SK-N-SH (cell line): ENCODE measurements at regions of chr9 and their contacts with region 1.

Region 1: GRCh38 chr9:130461218-130461630 is 16.5 kb downstream of the ASS1 start:
- DNase-seq: peak; percentile 87
- H3K4me3 ChIP-seq: peak overlapping the region in 1 of 2 experiments; percentile 37; a peak in 1 of 4 replicates
- H3K27ac ChIP-seq: no peak overlapping the region
- H3K4me1 ChIP-seq: peaks cover 0 to 5% of the 10 kb centered on the region in 2 experiments; a peak in 1 of 4 replicates
- H3K27me3 ChIP-seq: 0 out of 2 replicates have a peak, but pooled peaks cover 6% of the 10 kb centered on the region
- CTCF ChIP-seq: peak; percentile 83
- EP300 ChIP-seq: no peak
- RAD21 ChIP-seq: peak; percentile 89

Region 2: DNA sequence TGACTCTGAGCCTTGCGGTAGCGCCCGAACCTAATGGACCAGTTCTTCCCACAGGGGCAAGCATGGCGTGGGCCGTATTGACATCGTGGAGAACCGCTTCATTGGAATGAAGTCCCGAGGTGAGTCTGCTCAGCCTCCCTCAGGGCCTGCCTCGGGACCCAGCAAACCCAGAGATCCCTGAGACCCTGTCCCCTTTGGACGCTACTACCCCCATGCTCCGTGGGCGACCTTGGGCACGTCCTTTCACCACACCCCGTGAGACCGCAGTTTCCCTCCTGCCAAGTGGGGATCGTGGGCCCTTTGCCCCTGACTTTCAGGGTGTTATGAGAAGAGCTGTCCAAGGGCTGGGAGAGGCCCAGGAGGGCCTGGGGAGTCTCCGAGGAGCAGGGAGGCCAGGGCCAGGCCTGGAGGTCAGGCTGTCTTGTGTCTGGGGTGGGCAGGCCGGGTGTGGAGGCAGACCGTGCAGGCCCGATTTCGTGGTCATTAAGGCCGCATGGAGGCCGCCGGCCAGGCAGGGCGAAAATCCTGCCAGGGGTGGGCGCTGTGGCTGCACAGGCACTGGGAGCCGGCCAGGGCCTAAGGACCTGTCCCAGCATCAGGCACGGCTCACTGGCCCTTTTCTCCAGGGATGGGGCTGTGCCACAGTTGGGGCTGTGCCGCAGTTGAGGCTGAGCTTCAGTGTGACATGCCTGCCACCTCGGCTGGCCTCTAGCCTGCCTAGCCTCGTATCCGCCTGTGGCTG is 19.3 kb after region 1 on chr9:
- CTCF ChIA-PET with region 1: interaction called, 13 read pairs
- POLR2A ChIA-PET with region 1: no interaction called
- DNase-seq: no peak
- H3K4me3 ChIP-seq: no peak overlapping the region
- H3K27ac ChIP-seq: no peak overlapping the region
- H3K4me1 ChIP-seq: peaks cover 0 to 11% of the 10 kb centered on the region in 2 experiments; a peak in 1 of 4 replicates
- H3K27me3 ChIP-seq: no peaks in the 10 kb centered on the region
- CTCF ChIP-seq: peak; percentile 31
- EP300 ChIP-seq: no peak
- RAD21 ChIP-seq: 0 out of 2 replicates have a peak, but pooled peaks have one; percentile 17

Region 3: GRCh38 chr9:130487500-130487899 is 26.3 kb after region 1 on chr9:
- CTCF ChIA-PET with region 1: interaction called, 13 read pairs
- POLR2A ChIA-PET with region 1: no interaction called
- DNase-seq: no peak
- H3K4me3 ChIP-seq: no peak overlapping the region
- H3K27ac ChIP-seq: no peak overlapping the region
- H3K4me1 ChIP-seq: peaks cover 0 to 14% of the 10 kb centered on the region in 2 experiments; a peak in 1 of 4 replicates
- H3K27me3 ChIP-seq: no peaks in the 10 kb centered on the region
- CTCF ChIP-seq: no peak
- EP300 ChIP-seq: no peak
- RAD21 ChIP-seq: no peak

Region 4: DNA sequence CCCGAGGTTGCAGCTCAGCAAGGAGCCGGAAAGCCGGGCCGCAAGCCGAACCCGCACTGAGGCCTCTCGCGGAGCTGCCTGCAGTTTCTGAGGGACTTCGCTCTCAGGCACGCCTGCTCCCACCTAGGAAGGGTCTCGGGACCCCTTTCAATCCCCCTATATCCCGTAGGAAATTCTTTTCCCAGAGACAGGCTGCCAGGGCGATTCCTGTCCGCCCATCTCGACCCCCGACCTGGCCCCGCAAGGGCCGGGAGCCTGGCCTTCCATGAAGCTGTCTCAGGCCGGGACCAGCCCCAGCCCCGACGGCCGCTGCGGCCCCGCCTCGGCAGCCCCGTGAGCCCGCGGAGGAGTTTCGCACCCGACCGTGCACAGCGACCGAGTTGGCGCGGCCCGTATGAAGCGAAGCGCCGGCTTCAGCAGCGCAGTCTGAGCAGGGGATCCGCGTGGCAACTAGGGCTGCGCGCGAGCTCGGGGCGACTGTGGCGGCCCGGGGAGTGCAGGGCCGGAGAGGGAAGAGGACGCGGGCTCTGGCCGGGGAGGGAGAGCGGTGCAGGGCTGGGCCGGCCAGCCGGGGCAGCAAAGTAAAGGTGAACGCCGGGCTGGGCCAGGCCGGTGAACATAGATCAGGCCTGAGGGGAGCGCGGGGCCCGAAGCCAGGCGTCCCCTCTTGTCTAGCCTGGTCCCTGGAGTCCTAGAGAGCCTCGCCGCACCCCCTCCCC is 202.2 kb after region 1 on chr9:
- CTCF ChIA-PET with region 1: interaction called, 10 read pairs
- POLR2A ChIA-PET with region 1: no interaction called
- DNase-seq: peak; percentile 68
- H3K4me3 ChIP-seq: no peak overlapping the region
- H3K27ac ChIP-seq: no peak overlapping the region
- H3K4me1 ChIP-seq: peaks cover 0 to 3% of the 10 kb centered on the region in 2 experiments; a peak in 1 of 4 replicates
- H3K27me3 ChIP-seq: peaks cover 87% of the 10 kb centered on the region
- CTCF ChIP-seq: no peak
- EP300 ChIP-seq: no peak
- RAD21 ChIP-seq: no peak